AG04449 (cell line): ENCODE measurements at regions of chr11 and their contacts with region 1.

Region 1: DNA sequence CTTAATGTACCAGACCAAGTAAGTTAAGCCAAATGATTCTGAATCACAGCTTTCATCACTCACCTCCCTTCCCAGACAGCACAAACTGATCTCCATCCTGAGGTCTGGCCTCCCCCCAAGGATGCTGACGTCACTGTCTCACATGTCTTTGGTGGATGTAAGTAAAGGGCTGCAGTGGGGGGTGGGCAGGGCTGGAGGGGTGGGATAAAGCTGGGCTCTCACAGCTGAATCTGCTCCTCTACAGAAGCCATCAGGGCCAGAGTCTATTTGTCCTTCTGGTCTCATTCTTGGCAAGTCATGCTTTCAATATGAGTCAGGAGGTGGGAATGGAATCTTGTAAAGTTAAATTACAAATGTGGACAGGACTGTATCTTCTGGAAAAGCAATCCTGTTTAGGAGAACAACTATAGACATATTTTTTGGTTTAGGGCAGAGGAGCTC is 32.7 kb downstream of the P4HA3 start:
- DNase-seq: peak; percentile 97
- H3K4me3 ChIP-seq: no peak overlapping the region
- CTCF ChIP-seq: no peak

Region 2: DNA sequence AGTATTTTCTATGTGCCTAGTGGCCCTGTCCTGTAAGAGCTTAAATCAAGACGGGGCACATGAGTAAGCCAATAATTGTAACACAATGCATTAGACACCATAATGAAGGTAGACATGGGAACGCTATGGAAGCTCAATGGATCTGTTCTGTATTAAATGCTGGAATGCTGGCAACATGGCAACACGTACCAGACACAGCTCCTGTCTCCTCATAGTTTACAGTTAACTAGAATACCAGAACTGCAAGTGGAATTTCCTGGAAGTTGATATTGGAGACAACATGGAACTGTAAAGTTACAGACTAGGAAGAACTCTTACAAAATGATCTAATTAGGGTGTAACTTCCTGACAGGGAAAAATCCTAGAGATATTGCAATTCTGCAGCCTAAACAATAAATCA is 20.3 kb after region 1 on chr11:
- CTCF ChIA-PET with region 1: interaction called, 11 read pairs
- POLR2A ChIA-PET with region 1: no interaction called
- DNase-seq: no peak
- H3K4me3 ChIP-seq: no peak overlapping the region
- CTCF ChIP-seq: no peak

Region 3: DNA sequence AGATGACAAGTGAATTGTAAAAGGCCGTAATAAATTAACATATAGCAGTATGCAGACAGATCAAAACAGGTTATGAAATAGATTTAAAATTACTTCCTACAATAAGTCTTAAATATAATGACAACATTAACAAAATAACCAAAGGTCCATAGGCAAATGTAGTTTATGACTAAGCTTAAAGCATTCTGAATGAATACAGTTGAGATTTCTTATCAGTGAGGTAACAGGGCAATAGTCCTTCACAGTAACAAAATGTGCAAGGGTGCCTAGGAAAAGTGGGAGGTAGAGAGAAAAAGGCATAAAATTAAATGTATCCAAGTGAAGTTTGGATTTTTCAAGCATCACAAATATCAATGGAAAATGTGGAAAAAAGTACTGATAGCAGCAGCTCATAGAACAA is 53.5 kb after region 1 on chr11:
- CTCF ChIA-PET with region 1: no interaction called
- POLR2A ChIA-PET with region 1: no interaction called
- DNase-seq: no peak
- H3K4me3 ChIP-seq: no peak overlapping the region
- CTCF ChIP-seq: no peak